ENCODE measurements at regions of chr9 and their contacts with region 1.

Region 1: DNA sequence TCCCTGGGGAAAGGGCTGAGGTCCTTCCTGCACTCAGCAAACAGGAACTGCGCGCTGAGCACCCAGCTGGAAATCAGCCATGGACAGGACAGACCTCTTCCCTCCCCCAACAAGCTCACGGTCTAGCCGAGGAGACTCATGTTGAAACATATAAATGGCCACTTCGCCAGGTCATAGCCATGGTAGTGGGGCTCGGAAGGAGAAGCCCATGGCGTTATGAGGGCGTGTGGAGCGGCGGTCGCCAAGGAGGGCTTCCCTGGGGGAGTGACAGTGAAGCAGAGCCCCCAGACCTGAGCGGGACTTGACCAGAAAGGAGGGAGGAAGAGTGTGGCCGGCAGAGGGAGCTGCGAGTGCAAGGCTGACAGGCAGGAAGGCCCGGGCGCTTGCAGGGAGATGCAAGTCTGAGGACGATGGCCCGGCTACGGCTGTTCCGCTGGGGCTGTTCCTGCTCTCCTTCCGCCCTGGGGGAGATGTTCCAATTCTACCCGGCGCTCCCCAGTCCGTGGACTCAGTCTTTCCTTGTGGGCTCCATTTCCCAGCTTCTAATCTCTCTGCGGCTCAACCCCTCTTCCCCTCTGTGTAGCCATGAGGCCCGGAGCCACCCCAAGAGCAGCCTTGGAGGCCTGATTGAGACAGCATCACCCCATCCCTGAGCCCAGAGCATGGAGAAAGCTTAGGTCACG is 43.9 kb upstream of the PRRC2B start:
- DNase-seq: peak; percentile 96
- H3K4me3 Mint-ChIP-seq: peak overlapping the region; percentile 66
- H3K27ac Mint-ChIP-seq: no peak overlapping the region
- H3K4me1 Mint-ChIP-seq: peaks cover 10% of the 10 kb centered on the region
- H3K27me3 Mint-ChIP-seq: no peaks in the 10 kb centered on the region

Region 2: GRCh38 chr9:131160416-131161112 is 189.5 kb before region 1 on chr9:
- intact Hi-C with region 1: no loop called
- DNase-seq: no peak
- H3K4me3 Mint-ChIP-seq: no peak overlapping the region
- H3K27ac Mint-ChIP-seq: no peak overlapping the region
- H3K4me1 Mint-ChIP-seq: peaks cover 4% of the 10 kb centered on the region
- H3K27me3 Mint-ChIP-seq: no peaks in the 10 kb centered on the region

Region 3: GRCh38 chr9:131478421-131478868 is 128.4 kb after region 1 on chr9:
- intact Hi-C with region 1: loop called (anchors 1 kb)
- DNase-seq: peak; percentile 86
- H3K4me3 Mint-ChIP-seq: no peak overlapping the region
- H3K27ac Mint-ChIP-seq: peak overlapping the region; percentile 17
- H3K4me1 Mint-ChIP-seq: peaks cover 2% of the 10 kb centered on the region
- H3K27me3 Mint-ChIP-seq: no peaks in the 10 kb centered on the region

Region 4: GRCh38 chr9:131747356-131747755 is 397.3 kb after region 1 on chr9:
- intact Hi-C with region 1: loop called (anchors 5 kb)
- DNase-seq: peak; percentile 80
- H3K4me3 Mint-ChIP-seq: no peak overlapping the region
- H3K27ac Mint-ChIP-seq: no peak overlapping the region
- H3K4me1 Mint-ChIP-seq: peaks cover 41% of the 10 kb centered on the region
- H3K27me3 Mint-ChIP-seq: peaks cover 5% of the 10 kb centered on the region

Measured in activated CD4-positive, alpha-beta T cell treated with anti-CD3 and anti-CD28 coated beads, Interleukin-2, amount 10 ng/mL, durations not matched to agents 24 days and 14 days (primary cell).